PC-9 (cell line): ENCODE measurements at regions of chr13 and their contacts with region 1.

Region 1: DNA sequence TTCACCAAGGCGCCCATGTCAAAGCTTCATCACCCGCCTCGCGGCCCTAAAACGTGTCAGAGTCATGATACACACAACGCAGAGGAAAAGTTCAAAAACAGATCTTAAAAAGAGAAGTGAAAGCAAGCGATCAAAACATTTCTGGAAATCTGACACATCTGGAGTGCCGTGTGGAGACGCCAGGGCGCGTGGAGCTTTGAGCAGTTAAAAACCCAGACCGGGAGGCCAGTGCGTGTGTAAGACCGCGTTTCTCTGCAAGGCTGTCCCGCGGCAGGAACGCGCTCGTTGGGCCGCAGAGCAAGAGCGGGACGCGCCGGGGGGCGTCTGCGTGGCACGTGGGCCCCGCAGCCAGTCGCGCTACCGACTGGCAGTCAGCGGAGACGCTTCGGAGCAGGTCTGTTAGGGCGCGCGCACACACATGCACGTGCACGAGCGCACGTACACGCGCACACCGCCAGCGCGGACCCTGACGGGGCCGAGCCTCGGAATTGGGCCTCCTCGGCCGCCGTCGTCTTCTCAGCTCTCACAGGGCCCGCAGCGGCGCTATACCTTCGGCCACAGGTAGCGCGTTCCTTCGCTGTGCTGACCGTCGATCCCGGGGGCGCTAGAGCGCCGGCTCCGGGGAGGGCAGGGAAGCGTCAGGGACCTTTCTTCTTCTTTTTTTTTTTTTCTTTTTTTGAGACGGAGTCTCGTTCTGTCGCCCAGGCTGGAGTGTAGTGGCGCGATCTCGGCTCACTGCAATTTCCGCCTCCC is 35.8 kb downstream of the RNF6 start:
- DNase-seq: peak; percentile 82 to 87
- H3K4me3 ChIP-seq: peak overlapping the region; percentile 77
- H3K27ac ChIP-seq: no peak overlapping the region
- H3K4me1 ChIP-seq: no peaks in the 10 kb centered on the region
- H3K27me3 ChIP-seq: peaks cover 5% of the 10 kb centered on the region; the same call in 1 of the 2 replicates
- CTCF ChIP-seq: peak; percentile 63

Region 2: GRCh38 chr13:26230703-26231102 is 44.4 kb after region 1 on chr13:
- CTCF ChIA-PET with region 1: no interaction called
- POLR2A ChIA-PET with region 1: no interaction called
- intact Hi-C with region 1: no loop called
- DNase-seq: no peak
- H3K4me3 ChIP-seq: no peak overlapping the region
- H3K27ac ChIP-seq: no peak overlapping the region
- H3K4me1 ChIP-seq: no peaks in the 10 kb centered on the region
- H3K27me3 ChIP-seq: peaks cover 3% of the 10 kb centered on the region; the same call in 1 of the 2 replicates
- CTCF ChIP-seq: no peak

Region 3: GRCh38 chr13:26253787-26254582 is 67.7 kb after region 1 on chr13 and contains the start of gene CDK8:
- CTCF ChIA-PET with region 1: no interaction called
- POLR2A ChIA-PET with region 1: no interaction called
- intact Hi-C with region 1: loop called (anchors 2 kb)
- DNase-seq: peak; percentile 77 to 79
- H3K4me3 ChIP-seq: peak within 1 kb of the TSS; percentile 67
- H3K27ac ChIP-seq: peak within 1 kb of the TSS; percentile 59
- H3K4me1 ChIP-seq: peaks cover 28% of the 10 kb centered on the region
- H3K27me3 ChIP-seq: peaks cover 3% of the 10 kb centered on the region
- CTCF ChIP-seq: no peak
- total RNA-seq, gene CDK8: 14.8 and 16.8 TPM in 2 replicates

Region 4: DNA sequence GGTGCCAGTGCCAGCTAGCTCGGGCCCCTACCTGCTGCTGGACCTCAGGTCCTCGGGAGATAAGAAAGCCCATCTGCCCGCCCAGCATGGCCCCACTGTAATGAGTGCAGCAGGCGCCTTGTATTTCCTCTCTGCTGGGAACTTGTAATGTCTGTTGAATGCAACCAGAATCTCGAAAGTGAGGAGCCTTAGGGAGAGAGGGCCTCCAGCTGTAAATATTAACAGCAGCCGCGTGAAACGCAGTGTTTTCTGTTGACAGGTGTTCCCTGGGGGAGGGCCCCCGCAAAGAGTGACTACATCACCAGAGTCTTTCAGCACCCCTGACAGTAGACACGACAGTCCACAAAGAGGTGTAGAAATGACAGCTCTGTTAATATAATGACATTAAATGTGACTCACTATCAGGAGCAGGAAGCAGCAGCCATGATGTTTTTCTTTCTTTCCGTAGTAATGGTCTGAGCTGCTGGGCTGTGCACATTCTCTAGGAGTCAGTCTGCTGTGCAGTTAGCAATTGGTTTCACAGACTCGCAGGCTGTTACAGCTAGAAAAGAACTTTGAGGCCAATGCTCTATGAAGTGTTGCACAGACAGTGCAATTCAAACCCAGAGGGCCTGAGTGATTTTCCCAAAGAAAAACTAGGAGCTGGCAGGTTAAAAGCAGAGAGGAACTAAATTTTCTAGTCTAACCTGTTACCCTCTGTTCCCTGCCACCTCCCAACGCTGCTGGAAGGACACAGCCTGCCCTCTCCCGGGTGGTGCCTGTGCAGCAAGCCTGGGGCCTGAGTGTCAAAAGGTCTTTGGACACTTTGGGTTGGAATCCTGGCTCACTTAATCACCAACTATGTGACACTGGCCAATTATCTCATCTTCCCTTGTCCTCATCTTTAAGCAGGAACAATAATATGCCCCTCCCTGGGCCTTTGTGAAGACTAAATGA is 312.6 kb after region 1 on chr13:
- CTCF ChIA-PET with region 1: interaction called, 33 read pairs
- POLR2A ChIA-PET with region 1: no interaction called
- intact Hi-C with region 1: loop called (anchors 1 kb)
- DNase-seq: peak; percentile 33 to 46
- H3K4me3 ChIP-seq: no peak overlapping the region
- H3K27ac ChIP-seq: no peak overlapping the region
- H3K4me1 ChIP-seq: no peaks in the 10 kb centered on the region
- H3K27me3 ChIP-seq: no peaks in the 10 kb centered on the region; the same call in 1 of the 2 replicates
- CTCF ChIP-seq: no peak; the same call in 1 of the 2 replicates

Region 5: DNA sequence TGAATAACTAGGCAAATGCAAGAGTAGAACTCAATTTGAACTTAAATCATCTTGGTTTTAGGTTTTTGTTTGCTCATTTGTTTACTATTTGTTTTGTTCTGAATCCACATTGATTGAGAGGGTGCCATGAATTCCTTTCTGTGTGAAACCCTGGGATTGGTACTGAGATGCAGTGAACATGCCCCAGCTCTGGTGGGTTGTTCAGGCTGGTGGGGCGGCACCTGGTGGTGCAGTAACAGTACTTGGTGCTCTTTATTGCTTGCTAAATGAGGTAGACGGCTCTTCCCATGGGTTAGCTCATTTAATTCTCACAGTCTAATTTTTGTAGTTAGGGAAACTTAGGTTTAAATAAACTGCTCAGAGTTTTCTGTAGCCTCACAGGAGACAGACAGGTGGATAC is 419.6 kb after region 1 on chr13:
- CTCF ChIA-PET with region 1: interaction called, 11 read pairs
- POLR2A ChIA-PET with region 1: no interaction called
- intact Hi-C with region 1: no loop called
- DNase-seq: no peak
- H3K4me3 ChIP-seq: no peak overlapping the region
- H3K27ac ChIP-seq: no peak overlapping the region
- H3K4me1 ChIP-seq: no peaks in the 10 kb centered on the region
- H3K27me3 ChIP-seq: no peaks in the 10 kb centered on the region
- CTCF ChIP-seq: no peak

Region 6: DNA sequence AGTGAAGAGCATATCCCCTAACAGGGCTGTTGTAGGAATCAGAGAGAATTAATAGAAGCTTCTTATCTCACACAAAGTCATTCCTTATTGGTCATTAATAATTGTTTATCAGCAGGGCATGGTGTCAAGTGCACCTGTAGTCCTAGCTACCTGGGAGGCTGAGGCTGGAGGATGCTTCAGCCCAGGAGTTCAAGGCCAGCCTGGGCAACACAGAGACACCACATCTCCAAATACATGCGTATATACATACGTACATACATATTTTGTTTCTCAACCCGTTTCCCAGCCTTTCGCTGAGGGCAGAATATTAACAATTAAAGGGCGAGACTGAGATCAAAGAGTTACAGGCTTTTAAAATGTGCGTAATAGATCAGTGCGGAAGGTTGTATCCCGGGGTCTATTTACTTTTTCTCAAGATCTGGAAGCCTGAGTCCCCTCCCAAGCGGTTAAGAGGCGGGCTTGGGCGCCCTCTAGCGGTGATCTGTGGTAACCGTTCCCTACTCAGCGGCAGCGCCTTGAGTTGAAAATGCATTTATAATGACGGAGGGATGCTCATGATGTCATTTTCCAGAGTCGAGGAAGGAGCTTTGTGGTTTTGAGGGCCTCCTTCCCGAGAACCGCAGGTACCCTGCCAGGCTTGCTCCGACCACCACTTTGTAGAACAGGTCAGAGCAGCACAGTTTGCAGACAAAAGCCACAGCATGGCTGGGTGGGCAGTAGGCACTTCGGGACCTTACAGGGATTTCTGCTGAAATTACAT is 743.9 kb after region 1 on chr13:
- CTCF ChIA-PET with region 1: no interaction called
- POLR2A ChIA-PET with region 1: no interaction called
- intact Hi-C with region 1: loop called (anchors 2 kb)
- DNase-seq: peak in 1 of 2 experiments; percentile 48
- H3K4me3 ChIP-seq: no peak overlapping the region
- H3K27ac ChIP-seq: no peak overlapping the region
- H3K4me1 ChIP-seq: no peaks in the 10 kb centered on the region
- H3K27me3 ChIP-seq: peaks cover 73% of the 10 kb centered on the region
- CTCF ChIP-seq: peak; percentile 95